ENCODE measurements at regions of chr9 and their contacts with region 1.

Region 1: DNA sequence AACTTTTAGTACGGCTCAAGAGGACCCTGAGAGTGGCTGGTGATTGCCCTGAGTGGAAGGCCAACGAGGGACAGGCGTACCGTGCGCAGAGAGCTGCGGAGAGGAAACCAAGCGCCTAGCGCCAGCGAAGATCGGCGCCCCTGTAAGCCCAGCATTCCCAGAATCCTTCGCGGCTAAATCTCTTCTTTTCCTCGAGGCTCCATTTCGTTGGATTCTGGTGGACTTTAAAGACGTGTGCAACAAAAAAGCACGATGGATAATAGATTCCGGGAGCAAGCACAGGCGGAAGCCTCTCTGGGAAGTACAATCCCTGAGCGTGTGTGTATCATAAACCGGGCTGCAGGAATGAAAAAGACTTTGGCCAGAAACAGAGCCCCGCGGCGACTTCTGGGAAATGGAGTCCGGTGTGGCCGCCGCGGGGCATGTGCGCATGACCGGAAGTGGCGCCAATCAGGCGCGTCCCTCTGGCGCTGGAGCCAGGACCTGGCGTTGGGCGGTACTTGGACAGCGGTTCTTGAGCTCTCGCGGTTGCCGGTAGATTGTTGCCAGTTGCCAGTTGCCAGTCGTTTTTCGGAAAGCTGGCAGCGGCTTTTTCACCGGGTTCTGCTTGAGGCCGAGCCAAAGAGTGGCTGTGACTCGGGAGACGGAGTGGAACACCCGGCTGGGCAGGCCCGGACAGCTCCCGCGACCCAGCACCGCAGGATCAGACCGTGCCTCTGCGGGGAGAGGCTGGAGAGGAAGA is at the start of gene ZNF79:
- DNase-seq: peak; percentile 92
- H3K4me3 Mint-ChIP-seq: peak within 1 kb of the TSS; percentile 98
- H3K27ac Mint-ChIP-seq: peak within 1 kb of the TSS; percentile 97
- H3K4me1 Mint-ChIP-seq: peaks cover 37% of the 10 kb centered on the region
- H3K27me3 Mint-ChIP-seq: no peaks in the 10 kb centered on the region
- total RNA-seq, gene ZNF79: 11.9 and 14.4 TPM in 2 replicates

Region 2: GRCh38 chr9:127214421-127215267 is 209.5 kb before region 1 on chr9:
- intact Hi-C with region 1: loop called (anchors 10 kb)
- DNase-seq: peak; percentile 41
- H3K4me3 Mint-ChIP-seq: no peak overlapping the region
- H3K27ac Mint-ChIP-seq: no peak overlapping the region
- H3K4me1 Mint-ChIP-seq: peaks cover 2% of the 10 kb centered on the region
- H3K27me3 Mint-ChIP-seq: peaks cover 20% of the 10 kb centered on the region

Region 3: DNA sequence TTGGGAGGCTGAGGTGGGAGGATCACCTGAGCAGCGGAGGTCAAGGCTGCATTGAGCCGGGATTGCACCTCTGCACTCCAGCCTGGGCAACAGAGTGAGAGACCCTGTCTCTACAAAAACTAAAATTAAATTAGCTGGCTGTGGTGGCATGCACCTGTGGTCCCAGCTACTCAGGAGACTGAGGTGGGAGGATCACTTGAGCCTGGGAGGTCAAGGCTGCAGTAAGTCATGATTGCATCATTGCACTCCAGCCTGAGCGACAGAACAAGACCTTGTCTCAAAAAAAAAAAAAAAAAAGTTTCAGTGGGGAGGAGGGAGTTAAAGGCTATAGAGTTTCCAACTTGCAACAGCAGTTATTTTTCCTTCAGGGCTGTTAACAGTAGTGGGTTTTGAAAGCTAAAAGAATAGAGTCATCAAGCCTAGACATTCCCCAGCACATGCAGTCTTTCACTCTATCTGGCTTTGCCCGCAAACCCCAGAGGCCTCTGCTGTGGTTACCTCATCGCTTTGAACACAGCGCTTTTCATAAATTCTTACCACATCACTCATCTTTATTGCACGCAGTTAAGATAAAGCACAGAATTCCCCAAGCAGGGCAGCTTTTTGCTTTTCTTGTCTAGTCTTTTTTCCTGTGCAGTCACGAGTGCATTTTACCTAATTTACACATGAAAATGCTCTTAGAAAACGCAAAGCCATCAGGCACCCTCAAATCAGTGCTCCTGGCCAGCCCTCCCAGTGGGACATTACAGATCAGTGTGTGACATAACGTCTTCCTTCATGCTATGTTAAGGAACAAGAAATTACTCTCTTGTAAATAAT is 35.9 kb before region 1 on chr9:
- intact Hi-C with region 1: loop called (anchors 1 kb)
- DNase-seq: peak; percentile 83
- H3K4me3 Mint-ChIP-seq: peak overlapping the region; percentile 24
- H3K27ac Mint-ChIP-seq: peak overlapping the region; percentile 74
- H3K4me1 Mint-ChIP-seq: peaks cover 26% of the 10 kb centered on the region
- H3K27me3 Mint-ChIP-seq: peaks cover 41% of the 10 kb centered on the region

Region 4: GRCh38 chr9:127396808-127397497 is 27.2 kb before region 1 on chr9 and contains the start of gene SLC2A8:
- intact Hi-C with region 1: loop called (anchors 1 kb)
- DNase-seq: peak; percentile 97
- H3K4me3 Mint-ChIP-seq: peak within 1 kb of the TSS; percentile 83
- H3K27ac Mint-ChIP-seq: peak within 1 kb of the TSS; percentile 69
- H3K4me1 Mint-ChIP-seq: peaks cover 18% of the 10 kb centered on the region
- H3K27me3 Mint-ChIP-seq: peaks cover 32% of the 10 kb centered on the region
- total RNA-seq, gene SLC2A8: 9.8 and 10.7 TPM in 2 replicates

Region 5: DNA sequence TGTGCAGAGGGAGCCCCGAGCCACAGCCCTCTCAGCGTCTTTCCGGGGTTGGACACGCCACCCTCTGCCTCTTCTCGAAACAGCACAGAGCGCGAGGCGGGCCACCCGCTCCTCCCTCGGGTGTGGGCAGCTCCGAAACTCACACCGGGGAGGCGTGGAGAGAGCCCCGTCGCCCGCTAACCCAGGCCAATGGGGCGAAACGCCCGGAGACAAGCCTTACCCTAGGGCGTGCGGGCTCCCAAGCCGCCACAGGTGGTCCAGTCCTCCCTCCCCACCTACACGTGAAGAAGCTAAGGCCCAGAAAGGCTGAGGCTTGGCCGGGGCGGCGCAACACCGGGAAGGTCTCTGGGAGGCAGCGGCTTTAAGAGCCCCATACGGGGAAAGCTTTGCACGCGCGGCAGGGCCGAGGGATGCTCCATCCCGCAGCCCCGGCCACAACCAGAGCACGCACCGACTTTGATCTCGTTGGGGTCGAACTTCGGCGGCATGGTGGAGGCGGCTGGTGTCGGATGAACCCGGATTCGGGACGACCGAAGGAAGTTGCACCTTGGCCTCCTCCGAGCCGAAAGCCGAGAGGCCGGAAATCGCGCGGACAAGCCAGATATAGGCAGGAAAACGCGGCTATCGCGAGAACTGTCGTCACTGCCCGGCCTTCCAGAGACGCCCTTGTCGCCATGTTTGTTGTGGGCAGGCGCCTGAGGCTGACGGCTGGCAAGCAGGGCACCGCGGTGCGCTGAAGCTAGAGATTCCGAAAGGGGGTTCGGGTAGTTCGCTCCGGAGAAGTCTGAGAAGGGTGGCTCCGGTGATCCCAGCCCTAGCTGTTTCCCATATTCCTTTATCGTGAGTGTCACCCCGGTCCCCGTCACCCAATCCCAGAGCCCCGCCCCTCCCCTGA is 27.0 kb after region 1 on chr9 and contains the starts of genes LRSAM1 and RPL12:
- intact Hi-C with region 1: loop called (anchors 1 kb)
- DNase-seq: peak; percentile 95
- H3K4me3 Mint-ChIP-seq: peak within 1 kb of the TSS; percentile 97
- H3K27ac Mint-ChIP-seq: peak within 1 kb of the TSS; percentile 97
- H3K4me1 Mint-ChIP-seq: peaks cover 32% of the 10 kb centered on the region
- H3K27me3 Mint-ChIP-seq: no peaks in the 10 kb centered on the region
- total RNA-seq, gene LRSAM1: 26.4 and 26.6 TPM in 2 replicates
- total RNA-seq, gene RPL12: 1,311 and 1,325 TPM in 2 replicates

Region 6: DNA sequence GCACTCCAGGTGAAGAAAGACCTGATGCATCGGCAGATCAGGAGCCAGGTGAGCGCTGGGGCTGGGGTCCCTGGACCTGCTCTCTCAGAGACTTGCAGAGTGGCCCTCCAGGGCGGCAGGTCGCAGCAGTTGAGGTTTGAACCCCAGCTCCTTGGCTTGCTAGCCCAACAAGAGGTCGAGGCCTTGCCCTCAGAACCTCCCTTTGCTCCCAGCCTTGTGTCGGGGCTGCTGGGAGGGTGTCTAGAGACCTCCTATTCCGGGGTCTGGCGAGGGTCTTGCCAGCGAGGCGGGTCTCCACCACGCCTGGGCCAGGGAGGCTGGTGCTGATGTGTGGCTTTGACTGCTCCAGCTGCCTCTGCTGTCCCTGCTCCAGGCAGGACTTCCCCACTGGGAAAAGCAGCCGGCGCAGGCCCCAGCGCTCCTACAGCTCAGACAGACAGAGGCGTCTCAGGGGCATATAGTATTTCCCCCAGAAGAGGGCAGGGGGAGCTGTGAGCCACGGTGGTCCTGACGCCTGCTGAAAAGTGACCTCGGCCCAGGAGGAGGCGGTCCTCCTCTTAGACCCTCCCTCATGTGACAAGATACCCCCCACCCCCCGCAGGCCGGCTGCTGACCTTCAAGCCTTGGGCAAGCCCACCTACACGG is 65.5 kb after region 1 on chr9:
- intact Hi-C with region 1: no loop called
- DNase-seq: no peak
- H3K4me3 Mint-ChIP-seq: no peak overlapping the region
- H3K27ac Mint-ChIP-seq: no peak overlapping the region
- H3K4me1 Mint-ChIP-seq: no peaks in the 10 kb centered on the region
- H3K27me3 Mint-ChIP-seq: no peaks in the 10 kb centered on the region

Region 7: DNA sequence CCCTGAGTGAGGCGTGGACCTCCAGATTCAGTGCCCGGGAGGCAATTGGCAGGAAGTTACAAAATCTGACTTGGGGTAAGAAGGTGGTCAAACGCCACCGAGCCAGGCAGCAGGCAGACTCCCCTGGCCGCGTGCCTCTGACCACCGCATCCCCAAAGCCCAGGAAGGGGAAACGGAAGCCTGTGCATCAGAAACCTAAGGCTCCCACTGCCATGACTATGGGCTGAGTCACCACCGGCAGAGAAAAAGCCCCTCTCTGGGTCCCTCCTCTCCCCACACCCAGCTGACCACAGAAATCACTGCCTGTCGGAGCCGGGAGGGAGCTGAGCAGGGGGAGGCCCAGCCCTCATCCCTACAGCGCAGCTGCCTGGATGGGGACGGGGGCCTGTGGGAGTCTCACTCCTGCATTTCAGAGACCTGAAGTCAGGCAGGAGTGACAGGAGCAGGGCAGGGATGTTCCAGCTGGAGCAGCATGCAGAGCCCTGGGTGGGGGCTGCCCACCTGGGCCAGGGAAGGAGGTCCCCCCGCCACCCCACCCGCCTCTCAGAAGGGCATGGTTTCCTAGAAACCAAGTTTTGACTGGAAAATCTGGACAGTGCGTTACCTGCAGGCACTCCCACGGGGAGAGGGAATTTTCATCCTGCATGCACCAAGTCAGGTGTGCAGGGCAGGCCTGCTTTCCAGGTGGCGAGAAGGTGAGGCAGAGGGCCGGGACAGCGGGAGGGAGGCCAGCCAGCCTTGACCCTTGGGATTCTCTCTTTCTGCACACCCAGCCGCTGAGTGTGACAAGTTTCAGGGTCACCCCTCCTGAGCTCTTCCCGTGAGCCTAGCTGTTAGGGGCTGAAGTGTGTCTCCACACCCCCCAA is 95.4 kb after region 1 on chr9:
- intact Hi-C with region 1: no loop called
- DNase-seq: no peak
- H3K4me3 Mint-ChIP-seq: no peak overlapping the region
- H3K27ac Mint-ChIP-seq: no peak overlapping the region
- H3K4me1 Mint-ChIP-seq: peaks cover 2% of the 10 kb centered on the region
- H3K27me3 Mint-ChIP-seq: no peaks in the 10 kb centered on the region

Region 8: GRCh38 chr9:127770905-127771569 is 346.9 kb after region 1 on chr9:
- intact Hi-C with region 1: loop called (anchors 10 kb)
- DNase-seq: peak; percentile 98
- H3K4me3 Mint-ChIP-seq: peak overlapping the region; percentile 85
- H3K27ac Mint-ChIP-seq: peak overlapping the region; percentile 92
- H3K4me1 Mint-ChIP-seq: peaks cover 56% of the 10 kb centered on the region
- H3K27me3 Mint-ChIP-seq: no peaks in the 10 kb centered on the region